Endothelial cell of umbilical vein (primary cell): ENCODE measurements at regions of chr13 and their contacts with region 1.

Region 1: DNA sequence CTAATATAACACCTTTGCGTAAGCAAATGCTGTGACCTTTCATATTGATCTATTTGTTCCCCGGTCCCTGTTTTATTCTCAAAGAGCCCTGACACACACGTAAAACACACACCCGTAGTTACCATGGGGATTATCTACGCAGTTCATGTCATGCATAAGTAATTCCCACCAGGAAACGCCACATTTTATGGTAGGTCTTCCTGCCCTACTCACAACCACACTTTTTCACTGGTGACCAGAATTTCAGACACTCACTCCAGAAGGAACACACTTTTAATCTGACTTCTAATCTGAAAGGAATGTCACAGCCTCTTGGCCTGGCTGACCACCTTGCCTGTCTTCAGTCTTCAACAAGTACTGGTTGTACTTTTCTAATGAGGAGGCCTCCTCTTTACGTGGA is 46.8 kb downstream of the SLC7A1 start:
- DNase-seq: peak; percentile 92
- H3K4me3 ChIP-seq: no peak overlapping the region
- H3K27ac ChIP-seq: peak overlapping the region; percentile 99
- H3K4me1 ChIP-seq: peaks cover 46% of the 10 kb centered on the region
- H3K27me3 ChIP-seq: no peaks in the 10 kb centered on the region
- CTCF ChIP-seq: no peak
- POLR2A ChIP-seq: no peak

Region 2: DNA sequence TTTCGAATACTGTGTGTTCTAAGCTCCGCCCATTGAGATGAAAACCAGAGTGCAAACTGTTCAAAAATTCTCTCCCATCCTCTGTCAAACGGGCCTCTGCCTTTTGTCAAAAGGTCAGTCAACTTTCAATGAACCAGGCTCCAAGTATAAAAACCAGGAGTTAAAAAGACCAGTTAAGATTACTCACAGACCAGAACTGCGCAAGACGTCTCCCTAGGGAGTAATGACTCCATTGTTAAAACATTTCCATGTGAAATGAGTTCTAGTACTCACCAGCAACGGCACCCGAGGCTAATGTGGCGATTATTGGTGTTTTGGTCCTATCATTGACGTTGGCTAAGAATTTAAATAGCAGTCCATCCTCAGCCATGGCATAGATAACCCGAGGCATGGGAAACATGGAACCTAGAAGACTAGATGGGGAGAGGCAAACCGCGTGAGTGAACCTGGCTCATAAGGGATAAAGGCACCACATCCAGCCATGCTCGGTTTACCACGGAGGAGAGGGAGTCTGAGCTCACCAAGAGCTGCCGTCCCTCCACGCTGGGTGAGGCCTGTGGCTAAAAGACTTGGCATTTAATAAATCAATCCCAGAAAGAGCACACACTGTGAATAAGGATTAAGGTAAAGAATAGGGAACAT is 26.6 kb before region 1 on chr13:
- CTCF ChIA-PET with region 1: no interaction called
- POLR2A ChIA-PET with region 1: no interaction called
- dilution Hi-C with region 1: no loop called
- intact Hi-C with region 1: loop called (anchors 1 kb)
- DNase-seq: no peak
- H3K4me3 ChIP-seq: no peak overlapping the region
- H3K27ac ChIP-seq: no peak overlapping the region
- H3K4me1 ChIP-seq: peaks cover 34% of the 10 kb centered on the region
- H3K27me3 ChIP-seq: no peaks in the 10 kb centered on the region
- CTCF ChIP-seq: no peak
- POLR2A ChIP-seq: no peak

Region 3: DNA sequence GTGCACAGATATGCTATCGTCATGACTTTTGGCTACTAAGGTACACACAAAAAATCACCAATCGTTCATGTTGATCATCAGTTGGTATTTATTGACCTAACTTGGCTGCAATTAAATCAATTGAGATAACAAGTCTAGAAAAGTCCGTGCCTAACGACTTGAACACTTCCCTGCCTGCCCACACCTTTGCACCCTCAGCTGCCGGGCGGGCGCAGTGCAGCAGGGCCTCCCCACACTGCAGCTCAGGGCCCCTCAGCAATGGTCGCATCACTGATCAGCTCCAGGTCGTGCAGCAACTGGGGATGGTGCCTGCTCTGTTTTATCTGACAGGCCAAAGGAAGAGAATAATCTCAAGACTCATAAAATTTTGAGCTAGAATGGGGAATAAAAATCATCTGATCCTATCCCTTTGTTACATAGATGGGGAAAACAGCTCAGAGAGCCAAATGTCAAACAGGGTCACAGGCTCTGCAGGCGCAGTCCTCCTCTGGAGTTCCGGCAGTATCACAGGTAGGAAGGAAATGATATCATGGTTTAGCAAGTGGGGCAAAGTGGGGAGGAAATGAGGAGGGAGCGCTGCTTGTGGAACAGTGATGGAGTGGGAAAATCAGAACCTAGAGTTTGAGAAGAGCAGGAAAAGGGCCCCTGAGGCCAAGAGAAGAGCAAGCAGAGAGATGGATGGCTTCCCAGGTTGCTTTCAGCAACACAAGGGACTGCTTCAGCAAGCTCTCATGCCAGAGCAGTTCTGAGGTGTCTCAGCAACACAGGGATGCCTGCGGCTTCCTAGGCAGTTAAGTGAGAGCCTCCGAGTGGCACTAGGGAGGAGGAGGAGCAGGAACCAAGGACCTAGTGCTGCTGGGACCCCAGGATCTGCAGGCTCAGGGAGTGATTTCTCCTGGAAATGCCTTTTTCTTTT is 10.7 kb before region 1 on chr13:
- CTCF ChIA-PET with region 1: interaction called, 3 read pairs
- POLR2A ChIA-PET with region 1: no interaction called
- dilution Hi-C with region 1: no loop called
- intact Hi-C with region 1: loop called (anchors 1 kb)
- DNase-seq: peak; percentile 26
- H3K4me3 ChIP-seq: no peak overlapping the region
- H3K27ac ChIP-seq: peak overlapping the region; percentile 15
- H3K4me1 ChIP-seq: peaks cover 21% of the 10 kb centered on the region
- H3K27me3 ChIP-seq: no peaks in the 10 kb centered on the region
- CTCF ChIP-seq: no peak
- POLR2A ChIP-seq: no peak

Region 4: DNA sequence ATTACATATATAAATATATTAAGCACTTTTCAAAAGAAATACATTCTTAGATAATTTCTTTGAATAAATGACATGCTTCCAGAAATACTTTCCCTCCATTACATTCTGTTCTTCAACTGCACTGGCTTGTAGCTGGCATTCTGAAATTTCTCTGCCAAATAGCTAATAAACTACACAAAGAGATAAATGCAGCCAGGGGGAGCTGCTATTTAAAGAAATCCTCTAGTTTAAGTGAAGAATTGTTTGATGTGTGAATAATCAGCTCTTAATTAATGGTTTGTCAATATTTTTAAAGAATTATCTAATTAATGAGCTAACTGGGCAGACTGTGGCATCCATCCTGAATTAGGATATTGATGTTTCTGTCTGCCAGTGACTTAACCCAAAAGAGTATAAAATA is 16.1 kb after region 1 on chr13:
- CTCF ChIA-PET with region 1: interaction called, 18 read pairs
- POLR2A ChIA-PET with region 1: no interaction called
- dilution Hi-C with region 1: no loop called
- intact Hi-C with region 1: loop called (anchors 1 kb)
- DNase-seq: peak; percentile 37
- H3K4me3 ChIP-seq: no peak overlapping the region
- H3K27ac ChIP-seq: peak overlapping the region; percentile 73
- H3K4me1 ChIP-seq: peaks cover 44% of the 10 kb centered on the region
- H3K27me3 ChIP-seq: no peaks in the 10 kb centered on the region
- CTCF ChIP-seq: no peak
- POLR2A ChIP-seq: no peak

Region 5: GRCh38 chr13:29640665-29641064 is 91.9 kb after region 1 on chr13:
- CTCF ChIA-PET with region 1: no interaction called
- POLR2A ChIA-PET with region 1: no interaction called
- dilution Hi-C with region 1: no loop called
- intact Hi-C with region 1: no loop called
- DNase-seq: peak; percentile 31
- H3K4me3 ChIP-seq: no peak overlapping the region
- H3K27ac ChIP-seq: no peak overlapping the region
- H3K4me1 ChIP-seq: peaks cover 6% of the 10 kb centered on the region
- H3K27me3 ChIP-seq: no peaks in the 10 kb centered on the region
- CTCF ChIP-seq: no peak
- POLR2A ChIP-seq: no peak

Region 6: GRCh38 chr13:29892151-29892550 is 343.4 kb after region 1 on chr13:
- CTCF ChIA-PET with region 1: no interaction called
- POLR2A ChIA-PET with region 1: no interaction called
- dilution Hi-C with region 1: no loop called
- intact Hi-C with region 1: no loop called
- DNase-seq: no peak
- H3K4me3 ChIP-seq: no peak overlapping the region
- H3K27ac ChIP-seq: no peak overlapping the region
- H3K4me1 ChIP-seq: no peaks in the 10 kb centered on the region
- H3K27me3 ChIP-seq: peaks cover 2 to 6% of the 10 kb centered on the region in 2 experiments
- CTCF ChIP-seq: no peak
- POLR2A ChIP-seq: no peak